ENCODE measurements at regions of chr16 and their contacts with region 1.

Region 1: GRCh38 chr16:69726296-69727060 is at the start of gene NQO1:
- DNase-seq: peak; percentile 96
- ATAC-seq: peak; percentile 89
- H3K4me3 ChIP-seq: peak within 1 kb of the TSS; percentile 58 to 72 (median 72)
- H3K27ac ChIP-seq: peak within 1 kb of the TSS; percentile 87
- H3K4me1 ChIP-seq: peaks cover 71% of the 10 kb centered on the region
- H3K27me3 ChIP-seq: no peaks in the 10 kb centered on the region
- CTCF ChIP-seq: no peak
- EP300 ChIP-seq: peak; percentile 24 to 71; a peak in 2 of 4 replicates
- POLR2A ChIP-seq: peak; percentile 98 to 99
- RAD21 ChIP-seq: no peak
- total RNA-seq, gene NQO1: 1,060 and 1,621 TPM in 2 replicates

Region 2: DNA sequence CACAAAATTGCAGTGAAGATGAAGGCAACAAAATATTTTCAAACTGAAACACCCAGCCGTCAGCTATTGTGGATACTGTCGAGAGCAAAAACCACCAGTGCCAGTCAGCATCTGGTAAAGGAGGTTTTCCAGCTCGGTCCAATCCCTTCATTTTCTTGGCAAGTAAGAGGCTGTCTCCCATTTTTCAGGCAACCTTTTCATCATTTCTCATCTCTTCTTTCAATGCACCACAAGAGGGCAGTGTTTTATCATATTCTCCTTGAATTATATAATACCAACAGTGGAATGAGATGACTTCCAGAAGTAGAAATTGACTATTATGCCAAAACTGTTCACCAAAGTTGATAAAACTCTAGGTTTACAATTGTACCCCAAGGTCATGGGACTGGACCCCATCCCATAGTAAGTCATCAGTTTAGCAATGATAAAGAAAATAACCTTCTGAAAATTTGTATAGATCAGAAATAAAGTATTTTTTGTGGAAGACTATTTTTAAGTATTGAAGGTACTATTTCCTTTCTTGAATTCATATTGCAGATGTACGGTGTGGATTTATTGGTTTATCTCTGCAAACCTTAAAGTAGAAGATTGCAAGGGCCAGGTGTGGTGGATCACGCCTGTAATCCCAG is 16.9 kb before region 1 on chr16:
- CTCF ChIA-PET with region 1: no interaction called
- POLR2A ChIA-PET with region 1: interaction called, 36 read pairs
- in situ Hi-C with region 1: no loop called
- intact Hi-C with region 1: loop called (anchors 1 kb)
- DNase-seq: peak; percentile 81
- ATAC-seq: no peak
- H3K4me3 ChIP-seq: no peak overlapping the region
- H3K27ac ChIP-seq: no peak overlapping the region
- H3K4me1 ChIP-seq: peaks cover 12% of the 10 kb centered on the region; the same call in 1 of the 2 replicates
- H3K27me3 ChIP-seq: no peaks in the 10 kb centered on the region
- CTCF ChIP-seq: peak; percentile 85
- EP300 ChIP-seq: no peak
- POLR2A ChIP-seq: 0 out of 4 replicates have a peak, but pooled peaks of 1 of the 2 experiments have one; percentile 24
- RAD21 ChIP-seq: peak; percentile 80

Region 3: DNA sequence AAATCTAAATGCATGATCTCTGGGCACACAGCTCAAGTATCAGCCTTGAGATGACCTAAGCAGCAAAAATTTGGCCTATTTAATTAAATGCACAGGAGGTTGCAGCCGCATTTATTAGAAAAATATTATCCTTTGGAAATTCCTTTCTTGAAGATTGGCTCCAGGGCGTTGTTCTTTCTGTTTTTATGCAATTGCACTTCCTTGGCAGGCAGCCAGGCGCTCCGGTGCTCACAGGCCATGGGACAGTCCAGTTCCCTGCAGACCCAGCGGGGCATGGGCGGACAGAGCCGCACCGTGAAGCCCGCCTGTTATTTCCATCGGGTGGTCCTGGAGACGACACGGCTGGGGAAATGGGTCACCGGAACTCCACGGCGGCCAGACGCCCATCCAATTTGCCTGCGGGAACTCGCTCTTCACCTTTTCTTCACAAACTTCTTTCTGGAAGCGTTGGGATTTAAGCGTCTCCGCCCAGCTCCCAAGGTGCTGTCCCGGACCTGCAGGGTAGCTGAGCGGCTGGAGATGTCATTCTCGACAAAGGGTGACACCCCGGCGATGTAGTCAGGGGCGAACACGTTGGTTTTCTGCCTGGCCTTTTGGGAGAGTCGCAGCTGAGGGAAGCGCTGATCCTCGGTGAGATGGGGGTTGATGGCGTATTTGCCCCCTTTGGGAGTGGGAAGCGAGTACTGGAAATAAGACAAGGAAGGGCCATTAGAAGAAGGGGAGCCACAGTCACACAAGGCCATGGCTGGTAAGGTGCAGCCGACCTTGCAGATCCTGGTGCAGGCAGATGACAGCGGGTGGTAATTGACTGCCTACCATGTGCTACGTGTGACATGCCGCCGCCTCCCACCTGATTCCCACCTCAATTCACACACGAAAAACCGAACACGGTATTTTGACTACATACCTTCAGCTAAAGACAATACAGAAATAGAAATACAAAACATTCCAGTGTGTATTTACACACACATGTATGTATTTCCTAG is 15.7 kb after region 1 on chr16:
- CTCF ChIA-PET with region 1: no interaction called
- POLR2A ChIA-PET with region 1: interaction called, 46 read pairs
- in situ Hi-C with region 1: no loop called
- intact Hi-C with region 1: no loop called
- DNase-seq: no peak
- ATAC-seq: 0 out of 3 replicates have a peak, but pooled peaks have one; percentile 12
- H3K4me3 ChIP-seq: no peak overlapping the region
- H3K27ac ChIP-seq: no peak overlapping the region
- H3K4me1 ChIP-seq: peaks cover 8% of the 10 kb centered on the region
- H3K27me3 ChIP-seq: no peaks in the 10 kb centered on the region
- CTCF ChIP-seq: no peak
- EP300 ChIP-seq: no peak
- POLR2A ChIP-seq: no peak
- RAD21 ChIP-seq: no peak

Region 4: DNA sequence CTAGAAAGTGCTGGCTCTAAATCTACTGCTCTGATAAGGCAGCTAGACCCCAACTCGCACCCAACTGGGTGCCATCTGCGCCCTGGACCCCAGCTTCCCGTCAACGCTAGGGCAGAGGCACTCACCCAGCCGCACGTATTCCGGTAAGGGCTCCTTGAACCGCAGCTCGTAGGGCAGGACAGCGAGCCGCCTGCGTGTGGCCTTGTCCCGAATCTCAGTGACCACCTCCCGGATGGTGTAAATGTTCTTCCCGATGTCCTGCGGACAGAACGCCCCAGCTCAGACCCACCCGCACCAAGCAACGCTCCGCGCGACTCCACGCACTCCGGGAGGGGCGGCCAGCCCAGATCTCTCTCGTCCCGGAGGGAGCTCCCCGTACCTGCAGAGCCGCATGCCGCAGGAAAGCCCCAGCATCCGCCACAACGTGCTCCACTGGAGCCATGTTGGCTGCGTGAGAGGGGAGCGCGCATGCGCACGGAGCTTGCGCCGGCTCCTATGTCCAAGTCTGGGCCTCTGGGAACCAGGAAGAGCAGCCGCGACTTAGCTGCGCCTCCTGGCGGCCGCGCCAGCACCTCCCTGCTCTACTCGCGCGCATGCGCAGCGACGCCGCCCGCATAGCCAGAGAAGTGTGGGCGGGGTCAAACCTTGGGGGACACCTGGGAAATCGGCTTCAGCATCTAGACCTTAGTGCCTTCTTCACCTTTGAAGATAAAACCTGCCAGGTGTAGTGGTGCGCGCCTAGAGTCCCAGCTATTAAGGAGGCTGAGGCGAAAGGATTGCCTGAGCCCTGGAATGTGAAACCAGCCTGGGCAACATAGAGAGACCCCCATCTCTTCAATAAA is 28.2 kb after region 1 on chr16 and contains the start of gene NOB1:
- CTCF ChIA-PET with region 1: no interaction called
- POLR2A ChIA-PET with region 1: interaction called, 211 read pairs
- in situ Hi-C with region 1: no loop called
- intact Hi-C with region 1: loop called (anchors 1 kb)
- DNase-seq: peak; percentile 96
- ATAC-seq: peak; percentile 96
- H3K4me3 ChIP-seq: peak within 1 kb of the TSS; percentile 96 to 100 (median 100)
- H3K27ac ChIP-seq: peak within 1 kb of the TSS; percentile 74
- H3K4me1 ChIP-seq: peaks cover 40% of the 10 kb centered on the region
- H3K27me3 ChIP-seq: peaks cover 0 to 5% of the 10 kb centered on the region in 2 experiments; a peak in 1 of 5 replicates
- CTCF ChIP-seq: peak; percentile 100
- EP300 ChIP-seq: no peak
- POLR2A ChIP-seq: peak; percentile 98 to 99
- RAD21 ChIP-seq: peak; percentile 100
- total RNA-seq, gene NOB1: 47.1 and 83.5 TPM in 2 replicates

Region 5: DNA sequence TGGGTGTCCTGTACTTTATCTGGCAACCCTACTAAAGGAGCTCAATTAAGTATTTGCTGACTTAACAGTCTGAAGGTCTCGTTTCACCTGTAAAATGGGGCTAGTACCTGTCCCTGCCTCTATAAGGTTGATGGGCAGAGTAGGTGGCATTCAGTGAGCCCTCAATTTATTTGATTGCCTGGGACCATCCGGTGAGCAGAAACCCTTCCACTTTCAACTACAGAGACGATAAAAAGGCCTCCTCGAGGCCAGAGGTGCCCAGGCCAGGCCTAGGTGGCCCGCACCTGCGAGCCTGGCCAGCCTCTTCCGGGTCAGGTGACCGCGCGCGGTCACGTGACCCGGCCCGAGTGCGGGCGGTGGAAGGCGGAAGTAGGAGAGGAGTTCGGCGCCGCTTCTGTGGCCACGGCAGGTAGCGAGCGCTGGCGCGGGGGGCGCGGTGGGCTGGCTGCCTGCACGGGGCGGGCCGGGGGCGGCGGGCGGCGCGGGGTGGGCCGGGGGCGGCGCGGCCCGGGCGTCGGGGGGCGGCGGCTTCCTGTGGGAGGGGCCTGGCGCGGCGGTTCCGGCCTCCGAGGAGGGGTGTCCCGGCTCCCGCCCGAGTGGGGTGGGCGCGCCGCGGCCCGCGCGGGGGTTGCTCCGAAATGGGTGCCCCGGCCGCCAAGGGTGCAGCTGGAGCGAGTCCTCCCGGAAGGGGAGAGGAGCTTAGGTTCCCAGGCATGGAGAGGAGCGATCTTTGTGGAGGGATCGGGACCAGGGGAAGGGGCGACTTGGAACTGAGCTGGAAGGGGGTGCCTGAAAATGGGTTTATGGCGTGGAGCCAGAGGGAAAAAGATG is 35.7 kb after region 1 on chr16 and contains the start of gene WWP2:
- CTCF ChIA-PET with region 1: no interaction called
- POLR2A ChIA-PET with region 1: interaction called, 15 read pairs
- in situ Hi-C with region 1: no loop called
- intact Hi-C with region 1: no loop called
- DNase-seq: peak; percentile 77
- ATAC-seq: peak; percentile 86
- H3K4me3 ChIP-seq: peak within 1 kb of the TSS; percentile 95 to 99 (median 95)
- H3K27ac ChIP-seq: peak within 1 kb of the TSS; percentile 85
- H3K4me1 ChIP-seq: peaks cover 52% of the 10 kb centered on the region
- H3K27me3 ChIP-seq: no peaks in the 10 kb centered on the region; a peak in 2 of 5 replicates
- CTCF ChIP-seq: no peak
- EP300 ChIP-seq: no peak
- POLR2A ChIP-seq: peak; percentile 69 to 90
- RAD21 ChIP-seq: peak; percentile 53
- total RNA-seq, gene WWP2: 28.2 and 31.9 TPM in 2 replicates

Region 6: DNA sequence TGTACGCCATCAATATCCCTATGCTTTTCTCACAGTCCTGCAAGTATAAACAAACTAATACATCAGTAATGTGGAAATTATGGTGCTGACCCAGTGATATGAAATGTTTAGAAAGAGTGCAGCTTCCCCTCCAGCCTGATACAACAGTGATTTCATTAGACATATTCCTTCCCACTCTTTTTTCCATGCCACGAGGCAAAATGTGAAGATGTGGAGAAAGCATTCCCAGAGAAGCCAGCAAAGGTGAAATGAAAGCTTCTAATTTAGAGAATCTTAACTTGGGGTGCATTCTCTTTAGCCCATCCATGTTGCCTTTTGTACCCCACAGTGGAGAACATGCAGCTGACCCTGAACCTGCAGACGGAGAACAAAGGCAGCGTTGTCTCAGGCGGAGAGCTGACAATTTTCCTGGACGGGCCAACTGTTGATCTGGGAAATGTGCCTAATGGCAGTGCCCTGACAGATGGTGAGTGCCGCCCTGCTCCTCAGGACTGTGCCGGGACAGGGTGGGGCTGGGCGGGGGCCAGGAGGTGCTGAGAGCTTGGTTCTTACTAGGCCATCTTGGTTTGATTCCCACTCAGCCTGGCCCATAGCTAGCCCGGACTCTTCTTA is 113.4 kb after region 1 on chr16:
- CTCF ChIA-PET with region 1: no interaction called
- POLR2A ChIA-PET with region 1: no interaction called
- in situ Hi-C with region 1: no loop called
- intact Hi-C with region 1: no loop called
- DNase-seq: peak; percentile 81
- ATAC-seq: peak; percentile 81
- H3K4me3 ChIP-seq: peak overlapping the region in 2 of 3 experiments; percentile 2 to 9; a peak in 2 of 6 replicates
- H3K27ac ChIP-seq: peak overlapping the region; percentile 82
- H3K4me1 ChIP-seq: peaks cover 69% of the 10 kb centered on the region
- H3K27me3 ChIP-seq: no peaks in the 10 kb centered on the region
- CTCF ChIP-seq: no peak
- EP300 ChIP-seq: peak in 1 of 2 experiments; percentile 60; a peak in 2 of 4 replicates
- POLR2A ChIP-seq: no peak
- RAD21 ChIP-seq: no peak

Measured in HepG2 (cell line).